ENCODE measurements at regions of chr17 and their contacts with region 1.

Region 1: GRCh38 chr17:44804302-44805089 is 25.6 kb downstream of the GJC1 start:
- DNase-seq: peak; percentile 95
- H3K4me3 ChIP-seq: no peak overlapping the region
- H3K27ac ChIP-seq: peak overlapping the region; percentile 85 to 99 (median 96)
- H3K4me1 ChIP-seq: peaks cover 0 to 98% (median 91%) of the 10 kb centered on the region in 4 donors
- H3K27me3 ChIP-seq: no peaks in the 10 kb centered on the region
- CTCF ChIP-seq: no peak
- EP300 ChIP-seq: peak; percentile 80 to 92 (median 89)
- POLR2A ChIP-seq: no peak

Region 2: GRCh38 chr17:44872131-44872768 is 67.8 kb after region 1 on chr17:
- intact Hi-C with region 1: loop called (anchors 2 kb)
- DNase-seq: peak; percentile 94
- H3K4me3 ChIP-seq: no peak overlapping the region
- H3K27ac ChIP-seq: peak overlapping the region in 3 of 4 donors; percentile 77 to 91 (median 83)
- H3K4me1 ChIP-seq: peaks cover 0 to 52% (median 48%) of the 10 kb centered on the region in 4 donors
- H3K27me3 ChIP-seq: no peaks in the 10 kb centered on the region
- CTCF ChIP-seq: no peak
- EP300 ChIP-seq: peak in 1 of 4 donors; percentile 4
- POLR2A ChIP-seq: no peak

Measured in sigmoid colon (tissue), 7 donors.